CD4-positive, alpha-beta memory T cell (primary cell): ENCODE measurements at regions of chr2 and their contacts with region 1.

Region 1: DNA sequence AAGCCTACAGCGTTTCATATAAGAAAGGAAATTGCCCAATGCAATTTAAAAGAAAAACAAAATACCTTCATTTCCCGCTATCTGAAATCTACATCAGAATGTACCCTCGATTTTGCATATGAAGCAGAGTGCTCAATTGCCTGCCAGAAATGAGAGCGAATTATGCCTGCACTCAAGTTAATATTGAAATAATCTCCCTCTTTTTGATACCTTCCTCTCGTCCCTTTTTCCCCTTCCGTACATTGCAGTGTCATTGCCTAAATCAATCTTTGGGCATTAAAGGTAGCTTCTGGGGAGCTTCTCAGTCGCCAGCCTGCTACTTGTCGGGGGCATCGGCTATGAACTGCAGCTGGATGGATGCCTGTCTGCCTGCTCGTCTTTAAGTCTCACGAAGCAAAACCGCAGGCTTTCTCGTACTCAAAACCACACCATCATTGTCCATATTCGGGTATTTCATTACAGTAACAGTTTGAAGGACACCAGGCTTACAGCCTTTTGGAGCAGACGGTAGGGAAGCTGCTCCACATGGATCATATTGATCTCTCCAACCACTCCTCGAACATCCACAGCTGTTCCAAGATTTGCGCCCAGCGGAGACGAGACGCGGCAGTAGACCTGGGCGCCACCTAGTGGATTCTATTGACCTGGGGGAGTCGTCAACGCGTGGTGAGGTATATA is 64.0 kb upstream of the HNRNPA3 start:
- DNase-seq: peak; percentile 66 to 76 (median 71)
- H3K4me3 ChIP-seq: peak overlapping the region; percentile 53 to 73
- H3K4me3 Mint-ChIP-seq: peak overlapping the region; percentile 85 to 94 (median 90)
- H3K27ac ChIP-seq: peak overlapping the region; percentile 19
- H3K27ac Mint-ChIP-seq: peak overlapping the region in 6 of 7 donors; percentile 31 to 83 (median 58)
- H3K4me1 ChIP-seq: peaks cover 11% of the 10 kb centered on the region
- H3K4me1 Mint-ChIP-seq: peaks cover 6 to 12% (median 12%) of the 10 kb centered on the region in 4 donors
- H3K27me3 ChIP-seq: peaks cover 15% of the 10 kb centered on the region
- H3K27me3 Mint-ChIP-seq: peaks cover 14 to 19% of the 10 kb centered on the region in 2 donors

Region 2: GRCh38 chr2:175690113-175690837 is 1458.3 kb before region 1 on chr2:
- CTCF ChIA-PET with region 1: interaction called, 3 read pairs
- POLR2A ChIA-PET with region 1: no interaction called
- intact Hi-C with region 1: loop called (anchors 5 kb)
- DNase-seq: peak in 4 of 5 donors; percentile 23 to 48 (median 26)
- H3K4me3 ChIP-seq: no peak overlapping the region
- H3K4me3 Mint-ChIP-seq: no peak overlapping the region
- H3K27ac ChIP-seq: no peak overlapping the region
- H3K27ac Mint-ChIP-seq: peak overlapping the region in 1 of 7 donors; percentile 19
- H3K4me1 ChIP-seq: no peaks in the 10 kb centered on the region
- H3K4me1 Mint-ChIP-seq: no peaks in the 10 kb centered on the region
- H3K27me3 ChIP-seq: no peaks in the 10 kb centered on the region
- H3K27me3 Mint-ChIP-seq: peaks cover 14 to 15% of the 10 kb centered on the region in 2 donors

Region 3: GRCh38 chr2:176126929-176127773 is 1021.5 kb before region 1 on chr2:
- CTCF ChIA-PET with region 1: interaction called, 30 read pairs
- POLR2A ChIA-PET with region 1: interaction called, 3 read pairs
- intact Hi-C with region 1: loop called (anchors 1 kb)
- DNase-seq: peak; percentile 56 to 64 (median 58)
- H3K4me3 ChIP-seq: no peak overlapping the region
- H3K4me3 Mint-ChIP-seq: peak overlapping the region in 2 of 8 donors; percentile 7 to 17
- H3K27ac ChIP-seq: no peak overlapping the region
- H3K27ac Mint-ChIP-seq: peak overlapping the region in 2 of 7 donors; percentile 31 to 89
- H3K4me1 ChIP-seq: peaks cover 38% of the 10 kb centered on the region
- H3K4me1 Mint-ChIP-seq: peaks cover 10 to 45% (median 27%) of the 10 kb centered on the region in 4 donors
- H3K27me3 ChIP-seq: peaks cover 78% of the 10 kb centered on the region
- H3K27me3 Mint-ChIP-seq: peaks cover 61 to 63% of the 10 kb centered on the region in 2 donors

Region 4: DNA sequence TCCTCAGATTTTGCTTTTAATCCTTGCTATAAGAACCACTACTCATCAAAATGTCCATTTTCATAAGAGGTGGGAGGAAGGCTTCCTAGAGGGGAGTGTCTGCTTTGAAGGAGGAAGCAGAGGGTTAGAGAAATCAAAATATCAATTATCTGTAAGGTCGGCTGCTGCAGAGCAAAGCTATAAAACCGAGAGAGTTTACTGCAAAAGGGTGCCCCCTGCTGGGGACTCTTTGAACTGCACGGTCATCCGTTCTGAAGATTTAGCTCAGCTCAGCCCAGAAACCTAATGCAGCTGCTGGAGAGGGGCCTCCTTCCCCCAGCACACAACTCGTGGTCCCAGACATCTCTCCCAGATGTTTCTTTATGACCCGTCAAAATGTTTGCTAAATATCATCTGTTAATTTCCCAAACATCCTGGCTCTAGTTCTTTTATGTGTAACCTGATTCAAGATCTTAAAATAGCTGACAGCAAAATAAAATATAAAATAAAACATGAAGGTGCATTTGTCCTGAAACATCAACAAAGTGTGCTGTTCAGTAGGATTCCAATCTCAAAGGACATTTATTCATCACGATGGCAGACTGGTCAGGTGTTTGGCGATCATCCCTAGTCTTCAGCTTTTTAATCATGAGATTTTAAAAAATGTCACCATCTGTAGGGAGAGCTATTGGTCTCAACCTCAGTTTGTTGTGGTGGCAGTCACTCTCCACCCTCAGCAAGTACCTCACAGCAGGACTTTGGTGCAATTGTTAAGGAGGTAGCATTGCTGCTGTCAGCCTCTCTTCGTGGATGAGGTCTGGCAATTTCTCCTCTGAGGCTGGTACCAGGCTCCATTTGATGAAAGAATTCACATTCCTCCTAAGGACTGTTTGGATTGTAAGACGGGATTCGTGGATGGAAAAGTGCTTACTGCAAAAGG is 693.5 kb before region 1 on chr2:
- CTCF ChIA-PET with region 1: interaction called, 6 read pairs
- POLR2A ChIA-PET with region 1: no interaction called
- intact Hi-C with region 1: loop called (anchors 2 kb)
- DNase-seq: peak; percentile 54 to 68 (median 63)
- H3K4me3 ChIP-seq: no peak overlapping the region
- H3K4me3 Mint-ChIP-seq: no peak overlapping the region
- H3K27ac ChIP-seq: no peak overlapping the region
- H3K27ac Mint-ChIP-seq: no peak overlapping the region
- H3K4me1 ChIP-seq: peaks cover 5% of the 10 kb centered on the region
- H3K4me1 Mint-ChIP-seq: peaks cover 0 to 2% (median 0%) of the 10 kb centered on the region in 4 donors
- H3K27me3 ChIP-seq: peaks cover 8% of the 10 kb centered on the region
- H3K27me3 Mint-ChIP-seq: peaks cover 10 to 29% of the 10 kb centered on the region in 2 donors

Region 5: GRCh38 chr2:176638167-176639015 is 510.2 kb before region 1 on chr2:
- CTCF ChIA-PET with region 1: no interaction called
- POLR2A ChIA-PET with region 1: no interaction called
- intact Hi-C with region 1: loop called (anchors 5 kb)
- DNase-seq: peak in 4 of 5 donors; percentile 30 to 38 (median 37)
- H3K4me3 ChIP-seq: peak overlapping the region in 1 of 2 donors; percentile 41
- H3K4me3 Mint-ChIP-seq: peak overlapping the region; percentile 55 to 82 (median 68)
- H3K27ac ChIP-seq: no peak overlapping the region
- H3K27ac Mint-ChIP-seq: no peak overlapping the region
- H3K4me1 ChIP-seq: peaks cover 3% of the 10 kb centered on the region
- H3K4me1 Mint-ChIP-seq: peaks cover 0 to 11% (median 3%) of the 10 kb centered on the region in 4 donors
- H3K27me3 ChIP-seq: peaks cover 20% of the 10 kb centered on the region
- H3K27me3 Mint-ChIP-seq: peaks cover 37 to 52% of the 10 kb centered on the region in 2 donors

Region 6: DNA sequence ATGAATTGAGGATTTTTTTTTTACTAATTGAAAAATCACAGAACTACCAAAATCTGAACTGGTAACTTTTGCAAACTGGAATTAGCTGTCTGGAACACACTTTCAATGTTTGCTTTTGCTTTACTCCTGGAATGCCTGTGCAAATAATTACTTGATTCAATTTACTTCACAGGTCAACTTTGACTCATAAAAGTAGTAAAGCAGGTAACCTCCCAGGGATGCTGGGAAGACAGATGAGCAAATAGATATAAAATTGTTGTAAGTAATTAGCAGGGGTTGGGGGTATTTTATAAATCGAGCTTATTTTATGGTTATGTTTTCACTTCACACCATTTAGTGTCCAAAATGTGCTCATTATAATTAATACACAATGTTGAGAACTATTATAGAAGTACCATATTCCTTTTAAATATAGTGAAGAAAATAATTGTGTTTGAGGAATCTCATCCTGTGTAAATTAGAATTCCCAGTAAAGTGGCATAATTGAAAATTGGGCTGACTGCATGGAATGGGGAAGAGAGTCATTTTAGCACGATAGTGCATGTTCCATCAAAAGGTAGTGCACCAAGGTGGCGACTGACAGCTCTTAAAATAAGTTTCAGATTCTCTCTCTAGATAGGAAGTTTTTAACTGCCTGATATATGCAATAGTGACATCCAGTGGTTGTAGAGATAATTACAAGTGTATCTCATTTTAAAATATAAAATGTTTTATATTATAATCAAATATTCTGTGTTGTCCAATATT is 334.1 kb before region 1 on chr2:
- CTCF ChIA-PET with region 1: interaction called, 6 read pairs
- POLR2A ChIA-PET with region 1: no interaction called
- intact Hi-C with region 1: loop called (anchors 5 kb)
- DNase-seq: peak in 4 of 5 donors; percentile 22 to 34 (median 30)
- H3K4me3 ChIP-seq: no peak overlapping the region
- H3K4me3 Mint-ChIP-seq: peak overlapping the region in 3 of 8 donors; percentile 21 to 52 (median 24)
- H3K27ac ChIP-seq: no peak overlapping the region
- H3K27ac Mint-ChIP-seq: no peak overlapping the region
- H3K4me1 ChIP-seq: no peaks in the 10 kb centered on the region
- H3K4me1 Mint-ChIP-seq: peaks cover 0 to 5% (median 2%) of the 10 kb centered on the region in 4 donors
- H3K27me3 ChIP-seq: no peaks in the 10 kb centered on the region
- H3K27me3 Mint-ChIP-seq: peaks cover 0 to 4% of the 10 kb centered on the region in 2 donors

Region 7: GRCh38 chr2:177332041-177332991 is 183.7 kb after region 1 on chr2:
- CTCF ChIA-PET with region 1: interaction called, 16 read pairs
- POLR2A ChIA-PET with region 1: no interaction called
- intact Hi-C with region 1: no loop called
- DNase-seq: peak in 4 of 5 donors; percentile 55 to 62 (median 60)
- H3K4me3 ChIP-seq: no peak overlapping the region
- H3K4me3 Mint-ChIP-seq: no peak overlapping the region
- H3K27ac ChIP-seq: no peak overlapping the region
- H3K27ac Mint-ChIP-seq: peak overlapping the region in 4 of 7 donors; percentile 33 to 78 (median 64)
- H3K4me1 ChIP-seq: peaks cover 10% of the 10 kb centered on the region
- H3K4me1 Mint-ChIP-seq: peaks cover 0 to 13% (median 6%) of the 10 kb centered on the region in 4 donors
- H3K27me3 ChIP-seq: no peaks in the 10 kb centered on the region
- H3K27me3 Mint-ChIP-seq: no peaks in the 10 kb centered on the region